ENCODE measurements at regions of chr3 and their contacts with region 1.

Region 1: DNA sequence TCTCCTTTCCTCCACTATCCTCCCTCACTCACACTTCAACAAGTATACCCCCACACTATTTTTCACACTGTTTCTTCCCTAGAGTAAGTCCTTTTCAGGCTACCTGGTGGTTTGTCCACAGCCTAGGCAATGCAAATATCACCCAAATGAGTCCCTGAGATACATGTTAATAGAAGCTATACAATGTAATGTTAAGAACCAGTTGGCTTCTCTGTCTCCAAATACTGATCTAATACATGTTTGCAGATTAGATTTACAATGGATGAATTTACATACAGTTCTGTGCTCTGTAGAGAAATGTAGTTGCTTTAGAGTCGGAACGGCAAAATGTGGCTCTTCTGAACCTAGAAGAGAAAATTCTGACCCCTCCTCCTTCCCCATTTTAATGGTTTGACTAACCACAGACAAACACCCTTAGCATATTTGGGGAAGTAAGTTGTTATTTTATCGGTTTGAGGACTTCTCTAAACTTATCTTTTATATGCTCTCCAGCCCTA is 63.6 kb upstream of the MBNL1 start:
- DNase-seq: no peak

Region 2: DNA sequence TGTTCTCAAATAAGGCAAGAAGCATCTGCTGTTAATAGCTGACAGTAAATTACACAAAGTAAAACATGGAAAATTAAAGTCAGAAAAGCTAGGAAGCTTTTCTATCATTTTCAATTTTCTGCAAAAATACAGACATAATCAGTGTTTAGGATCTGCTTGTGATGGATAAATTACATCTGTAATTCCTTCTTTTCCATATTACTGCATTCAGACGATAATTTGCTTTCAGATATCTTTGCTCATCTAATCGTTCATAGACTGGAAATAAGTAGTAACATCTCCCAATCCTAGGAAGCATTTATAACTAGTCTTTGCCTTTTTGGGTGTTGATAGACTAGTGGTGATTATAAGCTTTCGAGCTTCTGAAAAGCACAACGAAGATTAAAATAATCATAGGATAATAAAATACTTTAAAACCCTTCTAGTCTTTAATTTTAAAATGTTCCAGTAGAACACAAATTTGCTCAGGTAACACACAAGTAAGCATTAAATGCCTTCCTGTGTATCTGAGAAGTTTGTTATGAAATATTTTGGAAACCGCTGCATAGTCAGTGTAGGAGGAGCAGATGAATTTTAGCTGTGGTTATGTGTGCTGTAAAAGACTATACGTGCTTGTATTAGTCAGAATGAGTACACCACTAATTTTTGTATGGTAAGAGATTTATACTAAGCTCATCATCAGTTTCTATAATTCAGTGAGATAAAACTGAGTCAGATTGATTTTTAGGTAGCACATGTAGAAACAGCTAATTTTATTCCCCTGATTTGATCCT is 104.6 kb after region 1 on chr3:
- in situ Hi-C with region 1: loop called (anchors 5 kb)
- DNase-seq: no peak

Region 3: GRCh38 chr3:153414982-153415381 is 1209.8 kb after region 1 on chr3:
- in situ Hi-C with region 1: no loop called
- DNase-seq: no peak

Measured in G401 (cell line).